B cell (primary cell): ENCODE measurements at regions of chr3 and their contacts with region 1.

Region 1: GRCh38 chr3:187679638-187680396 is 9.6 kb upstream of the SST start:
- DNase-seq: peak; percentile 72
- ATAC-seq: peak; percentile 66
- H3K4me3 ChIP-seq: no peak overlapping the region
- H3K4me3 Mint-ChIP-seq: no peak overlapping the region
- H3K27ac ChIP-seq: no peak overlapping the region
- H3K27ac Mint-ChIP-seq: no peak overlapping the region
- H3K4me1 ChIP-seq: no peaks in the 10 kb centered on the region
- H3K4me1 Mint-ChIP-seq: peaks cover 1% of the 10 kb centered on the region
- H3K27me3 ChIP-seq: peaks cover 0 to 19% (median 10%) of the 10 kb centered on the region in 4 experiments
- H3K27me3 Mint-ChIP-seq: peaks cover 51% of the 10 kb centered on the region
- CTCF ChIP-seq: peak; percentile 93

Region 2: DNA sequence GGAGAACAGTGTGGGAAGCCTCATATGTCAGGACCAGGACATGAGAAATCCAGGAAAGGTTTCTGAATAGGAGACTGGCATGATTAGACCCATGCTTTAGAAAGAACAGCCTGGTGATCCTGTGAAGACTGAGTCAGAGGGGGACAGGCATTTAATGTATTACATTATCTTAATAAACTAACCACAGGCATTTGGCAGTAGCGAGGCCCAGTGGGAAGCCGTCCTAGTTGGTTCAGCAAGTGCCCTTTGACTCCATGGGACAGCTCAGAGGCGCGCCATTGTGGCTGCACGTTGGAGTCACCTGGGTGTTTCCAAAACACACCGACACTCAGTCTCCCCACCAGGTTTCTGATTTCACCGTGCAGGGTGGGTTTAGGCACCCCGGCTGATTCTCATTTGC is 1227.3 kb before region 1 on chr3:
- CTCF ChIA-PET with region 1: no interaction called
- POLR2A ChIA-PET with region 1: no interaction called
- intact Hi-C with region 1: no loop called
- DNase-seq: no peak
- ATAC-seq: no peak
- H3K4me3 ChIP-seq: no peak overlapping the region
- H3K4me3 Mint-ChIP-seq: no peak overlapping the region
- H3K27ac ChIP-seq: no peak overlapping the region
- H3K27ac Mint-ChIP-seq: no peak overlapping the region
- H3K4me1 ChIP-seq: no peaks in the 10 kb centered on the region
- H3K4me1 Mint-ChIP-seq: peaks cover 2% of the 10 kb centered on the region
- H3K27me3 ChIP-seq: no peaks in the 10 kb centered on the region
- H3K27me3 Mint-ChIP-seq: no peaks in the 10 kb centered on the region
- CTCF ChIP-seq: no peak

Region 3: GRCh38 chr3:187223799-187224198 is 456.0 kb before region 1 on chr3:
- CTCF ChIA-PET with region 1: interaction called, 33 read pairs
- POLR2A ChIA-PET with region 1: no interaction called
- intact Hi-C with region 1: no loop called
- DNase-seq: no peak
- ATAC-seq: no peak
- H3K4me3 ChIP-seq: no peak overlapping the region
- H3K4me3 Mint-ChIP-seq: no peak overlapping the region
- H3K27ac ChIP-seq: no peak overlapping the region
- H3K27ac Mint-ChIP-seq: no peak overlapping the region
- H3K4me1 ChIP-seq: no peaks in the 10 kb centered on the region
- H3K4me1 Mint-ChIP-seq: no peaks in the 10 kb centered on the region
- H3K27me3 ChIP-seq: peaks cover 0 to 10% (median 3%) of the 10 kb centered on the region in 4 experiments
- H3K27me3 Mint-ChIP-seq: peaks cover 37% of the 10 kb centered on the region
- CTCF ChIP-seq: no peak

Region 4: GRCh38 chr3:187616307-187616972 is 63.4 kb before region 1 on chr3:
- CTCF ChIA-PET with region 1: interaction called, 44 read pairs
- POLR2A ChIA-PET with region 1: no interaction called
- intact Hi-C with region 1: loop called (anchors 1 kb)
- DNase-seq: peak; percentile 56
- ATAC-seq: no peak
- H3K4me3 ChIP-seq: no peak overlapping the region
- H3K4me3 Mint-ChIP-seq: no peak overlapping the region
- H3K27ac ChIP-seq: no peak overlapping the region
- H3K27ac Mint-ChIP-seq: no peak overlapping the region
- H3K4me1 ChIP-seq: no peaks in the 10 kb centered on the region
- H3K4me1 Mint-ChIP-seq: no peaks in the 10 kb centered on the region
- H3K27me3 ChIP-seq: peaks cover 0 to 7% (median 2%) of the 10 kb centered on the region in 4 experiments
- H3K27me3 Mint-ChIP-seq: peaks cover 24% of the 10 kb centered on the region
- CTCF ChIP-seq: peak; percentile 87

Region 5: GRCh38 chr3:187662848-187663409 is 16.9 kb before region 1 on chr3:
- CTCF ChIA-PET with region 1: interaction called, 85 read pairs
- POLR2A ChIA-PET with region 1: no interaction called
- intact Hi-C with region 1: no loop called
- DNase-seq: peak; percentile 23
- ATAC-seq: no peak
- H3K4me3 ChIP-seq: no peak overlapping the region
- H3K4me3 Mint-ChIP-seq: peak overlapping the region; percentile 20
- H3K27ac ChIP-seq: no peak overlapping the region
- H3K27ac Mint-ChIP-seq: no peak overlapping the region
- H3K4me1 ChIP-seq: peaks cover 8 to 13% of the 10 kb centered on the region in 2 donors
- H3K4me1 Mint-ChIP-seq: peaks cover 15% of the 10 kb centered on the region
- H3K27me3 ChIP-seq: peaks cover 0 to 5% (median under 1%) of the 10 kb centered on the region in 4 experiments
- H3K27me3 Mint-ChIP-seq: peaks cover 26% of the 10 kb centered on the region
- CTCF ChIP-seq: no peak

Region 6: GRCh38 chr3:187689984-187690383 is 10.2 kb after region 1 on chr3:
- CTCF ChIA-PET with region 1: interaction called, 30 read pairs
- POLR2A ChIA-PET with region 1: no interaction called
- intact Hi-C with region 1: no loop called
- DNase-seq: no peak
- ATAC-seq: no peak
- H3K4me3 ChIP-seq: no peak overlapping the region
- H3K4me3 Mint-ChIP-seq: no peak overlapping the region
- H3K27ac ChIP-seq: no peak overlapping the region
- H3K27ac Mint-ChIP-seq: no peak overlapping the region
- H3K4me1 ChIP-seq: no peaks in the 10 kb centered on the region
- H3K4me1 Mint-ChIP-seq: no peaks in the 10 kb centered on the region
- H3K27me3 ChIP-seq: peaks cover 0 to 9% (median 1%) of the 10 kb centered on the region in 4 experiments
- H3K27me3 Mint-ChIP-seq: peaks cover 39% of the 10 kb centered on the region
- CTCF ChIP-seq: no peak

Region 7: GRCh38 chr3:187706971-187707370 is 27.2 kb after region 1 on chr3:
- CTCF ChIA-PET with region 1: interaction called, 15 read pairs
- POLR2A ChIA-PET with region 1: no interaction called
- intact Hi-C with region 1: no loop called
- DNase-seq: no peak
- ATAC-seq: no peak
- H3K4me3 ChIP-seq: no peak overlapping the region
- H3K4me3 Mint-ChIP-seq: no peak overlapping the region
- H3K27ac ChIP-seq: no peak overlapping the region
- H3K27ac Mint-ChIP-seq: no peak overlapping the region
- H3K4me1 ChIP-seq: no peaks in the 10 kb centered on the region
- H3K4me1 Mint-ChIP-seq: no peaks in the 10 kb centered on the region
- H3K27me3 ChIP-seq: no peaks in the 10 kb centered on the region
- H3K27me3 Mint-ChIP-seq: no peaks in the 10 kb centered on the region
- CTCF ChIP-seq: no peak

Region 8: DNA sequence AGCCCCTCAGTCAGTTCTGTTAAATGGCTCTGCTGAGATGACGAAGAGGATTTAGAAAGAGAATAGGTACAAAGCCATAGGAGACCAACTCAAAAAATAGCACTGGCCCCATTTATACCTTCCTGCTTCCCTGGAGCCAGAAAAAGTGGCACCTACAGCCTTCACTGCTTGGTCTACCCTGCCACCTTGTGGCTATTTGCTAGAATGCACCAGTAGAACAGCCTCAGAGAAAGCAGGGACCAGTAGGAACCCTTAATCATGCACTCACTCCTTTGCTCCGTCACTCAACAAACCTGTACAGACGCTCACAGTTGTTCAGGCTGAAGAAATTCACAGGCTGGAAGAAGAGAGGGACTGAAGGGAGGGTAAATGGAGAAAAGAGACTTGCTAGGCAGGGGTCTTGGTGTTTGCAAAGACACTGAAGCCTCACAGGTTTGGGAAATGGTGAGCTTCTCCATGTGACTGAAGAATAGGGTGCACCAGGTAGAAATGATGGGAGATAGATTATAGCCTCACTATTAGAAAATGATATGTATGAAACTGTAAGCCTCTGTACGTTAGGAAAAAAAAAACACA is 34.7 kb after region 1 on chr3:
- CTCF ChIA-PET with region 1: interaction called, 29 read pairs
- POLR2A ChIA-PET with region 1: no interaction called
- intact Hi-C with region 1: loop called (anchors 1 kb)
- DNase-seq: peak; percentile 74
- ATAC-seq: peak; percentile 86
- H3K4me3 ChIP-seq: no peak overlapping the region
- H3K4me3 Mint-ChIP-seq: no peak overlapping the region
- H3K27ac ChIP-seq: no peak overlapping the region
- H3K27ac Mint-ChIP-seq: no peak overlapping the region
- H3K4me1 ChIP-seq: no peaks in the 10 kb centered on the region
- H3K4me1 Mint-ChIP-seq: no peaks in the 10 kb centered on the region
- H3K27me3 ChIP-seq: no peaks in the 10 kb centered on the region
- H3K27me3 Mint-ChIP-seq: no peaks in the 10 kb centered on the region
- CTCF ChIP-seq: peak; percentile 97

Region 9: GRCh38 chr3:187745201-187746058 is 65.6 kb after region 1 on chr3 and contains the start of gene BCL6:
- CTCF ChIA-PET with region 1: no interaction called
- POLR2A ChIA-PET with region 1: no interaction called
- intact Hi-C with region 1: no loop called
- DNase-seq: peak; percentile 97
- ATAC-seq: peak; percentile 60
- H3K4me3 ChIP-seq: peak within 1 kb of the TSS; percentile 67 to 96 (median 84)
- H3K4me3 Mint-ChIP-seq: peak within 1 kb of the TSS; percentile 97
- H3K27ac ChIP-seq: peak within 1 kb of the TSS; percentile 88 to 96
- H3K27ac Mint-ChIP-seq: peak within 1 kb of the TSS; percentile 96
- H3K4me1 ChIP-seq: peaks cover 38 to 52% of the 10 kb centered on the region in 2 donors
- H3K4me1 Mint-ChIP-seq: peaks cover 74% of the 10 kb centered on the region
- H3K27me3 ChIP-seq: no peaks in the 10 kb centered on the region
- H3K27me3 Mint-ChIP-seq: no peaks in the 10 kb centered on the region
- CTCF ChIP-seq: no peak
- total RNA-seq, gene BCL6: 48.2 and 55.5 TPM in 2 replicates

Region 10: GRCh38 chr3:187802928-187803259 is 123.1 kb after region 1 on chr3:
- CTCF ChIA-PET with region 1: no interaction called
- POLR2A ChIA-PET with region 1: no interaction called
- intact Hi-C with region 1: no loop called
- DNase-seq: no peak
- ATAC-seq: peak; percentile 58
- H3K4me3 ChIP-seq: no peak overlapping the region
- H3K4me3 Mint-ChIP-seq: peak overlapping the region; percentile 46
- H3K27ac ChIP-seq: no peak overlapping the region
- H3K27ac Mint-ChIP-seq: no peak overlapping the region
- H3K4me1 ChIP-seq: peaks cover 4 to 25% of the 10 kb centered on the region in 2 donors
- H3K4me1 Mint-ChIP-seq: peaks cover 32% of the 10 kb centered on the region
- H3K27me3 ChIP-seq: peaks cover 0 to 5% (median 0%) of the 10 kb centered on the region in 4 experiments
- H3K27me3 Mint-ChIP-seq: peaks cover 6% of the 10 kb centered on the region
- CTCF ChIP-seq: no peak